ENCODE measurements at regions of chr3 and their contacts with region 1.

Region 1: DNA sequence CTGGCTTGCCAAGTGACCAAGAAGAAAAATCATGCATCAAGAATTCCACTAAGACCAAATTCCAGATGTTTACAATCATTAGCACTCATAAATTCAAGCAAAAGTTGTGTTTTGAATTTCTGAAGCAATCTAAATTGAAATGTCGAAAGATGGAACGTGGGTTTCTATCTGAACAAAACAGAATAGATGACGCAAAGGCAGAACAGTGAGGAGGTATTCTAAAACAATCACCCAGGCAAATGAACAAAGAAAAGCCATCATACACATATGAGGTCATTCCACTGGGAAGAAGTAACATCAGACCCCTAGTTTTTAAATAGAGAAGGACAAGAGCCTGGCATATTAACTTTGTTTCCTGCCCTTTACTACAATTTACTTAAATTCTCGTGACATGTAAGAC is 58.0 kb downstream of the MCF2L2 start:
- DNase-seq: no peak
- H3K4me3 ChIP-seq: no peak overlapping the region
- H3K27ac ChIP-seq: peak overlapping the region; percentile 98
- H3K4me1 ChIP-seq: peaks cover 17% of the 10 kb centered on the region
- H3K27me3 ChIP-seq: no peaks in the 10 kb centered on the region
- CTCF ChIP-seq: no peak
- POLR2A ChIP-seq: no peak

Region 2: DNA sequence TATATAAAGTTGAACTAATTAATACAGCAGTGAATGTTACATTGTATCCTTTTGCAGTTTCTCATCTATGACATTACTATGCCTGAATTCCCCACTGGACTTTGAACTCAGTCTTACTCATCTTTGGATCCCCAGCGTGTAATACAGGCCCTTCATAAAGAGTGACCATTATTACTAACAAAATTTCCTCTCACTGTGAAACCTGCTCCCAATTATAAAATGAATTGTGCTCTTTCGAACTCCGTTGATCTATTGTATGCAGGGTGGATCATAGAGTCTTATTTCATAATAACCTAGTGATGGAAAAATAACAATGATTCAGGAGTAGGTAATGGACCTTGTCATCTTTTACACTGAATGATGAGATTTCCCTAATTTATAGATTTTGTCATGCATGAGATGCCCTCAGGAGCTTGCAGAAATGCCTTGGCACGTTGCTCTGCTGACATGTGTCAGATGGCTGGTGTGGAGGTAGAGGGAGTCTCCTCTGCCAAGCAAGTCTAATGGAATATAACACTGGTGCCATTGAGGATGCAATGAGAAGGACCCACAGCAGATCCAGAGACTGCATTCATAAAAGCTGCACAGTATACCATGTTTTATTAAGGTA is 91.8 kb before region 1 on chr3:
- CTCF ChIA-PET with region 1: no interaction called
- POLR2A ChIA-PET with region 1: no interaction called
- dilution Hi-C with region 1: no loop called
- intact Hi-C with region 1: no loop called
- DNase-seq: no peak
- H3K4me3 ChIP-seq: no peak overlapping the region
- H3K27ac ChIP-seq: no peak overlapping the region
- H3K4me1 ChIP-seq: peaks cover 22% of the 10 kb centered on the region
- H3K27me3 ChIP-seq: no peaks in the 10 kb centered on the region
- CTCF ChIP-seq: no peak
- POLR2A ChIP-seq: no peak

Region 3: GRCh38 chr3:183328823-183329222 is 41.6 kb before region 1 on chr3:
- CTCF ChIA-PET with region 1: no interaction called
- POLR2A ChIA-PET with region 1: no interaction called
- dilution Hi-C with region 1: no loop called
- intact Hi-C with region 1: loop called (anchors 2 kb)
- DNase-seq: no peak
- H3K4me3 ChIP-seq: no peak overlapping the region
- H3K27ac ChIP-seq: no peak overlapping the region
- H3K4me1 ChIP-seq: peaks cover 24% of the 10 kb centered on the region
- H3K27me3 ChIP-seq: no peaks in the 10 kb centered on the region
- CTCF ChIP-seq: no peak
- POLR2A ChIP-seq: no peak